SK-N-SH (cell line): ENCODE measurements at regions of chr7 and their contacts with region 1.

Region 1: DNA sequence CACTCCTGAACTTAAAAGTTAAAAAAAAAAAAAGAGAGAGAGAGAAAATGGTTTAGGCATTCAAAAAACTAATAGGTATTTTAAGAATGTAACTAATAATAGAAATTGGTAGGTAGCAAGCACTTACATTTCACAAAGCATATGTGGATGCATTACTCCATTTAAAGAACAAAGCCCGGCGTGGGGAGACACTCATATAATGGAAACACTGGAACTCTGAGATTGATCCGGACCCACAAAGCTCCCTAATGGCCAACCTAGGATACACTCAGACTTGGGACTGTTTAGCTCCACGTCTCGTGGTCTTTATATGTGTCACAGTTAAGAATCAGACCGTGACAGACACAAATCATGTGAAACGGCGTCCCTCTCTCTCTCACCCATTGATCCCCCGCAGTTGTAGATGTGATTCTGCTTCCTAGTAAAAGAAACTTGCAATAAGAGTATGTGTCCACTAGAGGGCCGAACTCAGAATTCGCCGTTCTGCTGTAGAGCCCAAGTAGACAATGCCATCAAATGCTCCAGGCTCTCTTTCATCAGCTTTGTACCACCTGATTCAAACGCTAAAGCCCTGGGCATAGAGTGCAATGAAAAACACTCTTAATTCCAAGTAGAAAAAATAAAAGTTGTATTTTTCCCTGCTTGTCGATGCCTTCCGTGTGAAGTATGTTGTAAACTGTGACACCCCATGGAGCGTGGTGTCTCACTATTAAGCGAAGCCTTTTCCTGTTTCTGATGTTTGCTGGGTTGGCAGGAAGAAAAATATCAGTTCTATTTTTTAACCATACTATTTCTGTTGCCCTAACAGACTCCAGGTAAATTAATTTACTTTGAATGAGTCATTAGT is 429.0 kb upstream of the MTPN start:
- DNase-seq: peak; percentile 65
- H3K4me3 ChIP-seq: peak overlapping the region in 1 of 2 experiments; percentile 21; a peak in 1 of 4 replicates
- H3K27ac ChIP-seq: no peak overlapping the region
- H3K4me1 ChIP-seq: peaks cover 0 to 2% of the 10 kb centered on the region in 2 experiments; a peak in 1 of 4 replicates
- H3K27me3 ChIP-seq: no peaks in the 10 kb centered on the region
- CTCF ChIP-seq: peak; percentile 90
- EP300 ChIP-seq: no peak
- RAD21 ChIP-seq: peak; percentile 85

Region 2: DNA sequence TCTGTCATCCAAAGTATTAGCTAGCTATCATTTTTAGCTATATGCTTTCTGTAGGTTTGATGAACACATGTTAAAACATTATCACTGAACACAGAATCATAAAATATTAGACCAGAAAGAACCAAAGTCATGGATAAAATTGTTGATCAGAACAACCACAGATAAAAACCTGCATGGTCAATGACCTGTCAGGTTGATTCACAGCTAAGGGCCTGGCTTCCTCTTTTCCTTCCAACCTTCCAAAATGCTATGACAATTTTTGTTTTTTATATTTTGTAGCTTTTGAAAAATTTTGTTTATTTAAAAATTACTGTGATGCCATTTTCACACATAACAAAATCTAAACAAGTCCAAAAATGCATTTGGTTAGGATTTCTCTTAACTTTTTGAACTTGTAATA is 17.9 kb after region 1 on chr7:
- CTCF ChIA-PET with region 1: interaction called, 24 read pairs
- POLR2A ChIA-PET with region 1: no interaction called
- DNase-seq: no peak
- H3K4me3 ChIP-seq: no peak overlapping the region
- H3K27ac ChIP-seq: no peak overlapping the region
- H3K4me1 ChIP-seq: no peaks in the 10 kb centered on the region
- H3K27me3 ChIP-seq: no peaks in the 10 kb centered on the region
- CTCF ChIP-seq: no peak
- EP300 ChIP-seq: no peak
- RAD21 ChIP-seq: no peak

Region 3: GRCh38 chr7:136470179-136470578 is 64.0 kb after region 1 on chr7:
- CTCF ChIA-PET with region 1: no interaction called
- POLR2A ChIA-PET with region 1: no interaction called
- DNase-seq: no peak
- H3K4me3 ChIP-seq: no peak overlapping the region
- H3K27ac ChIP-seq: no peak overlapping the region
- H3K4me1 ChIP-seq: no peaks in the 10 kb centered on the region
- H3K27me3 ChIP-seq: no peaks in the 10 kb centered on the region
- CTCF ChIP-seq: no peak
- EP300 ChIP-seq: no peak
- RAD21 ChIP-seq: no peak

Region 4: GRCh38 chr7:136594739-136595144 is 188.6 kb after region 1 on chr7:
- CTCF ChIA-PET with region 1: interaction called, 11 read pairs
- POLR2A ChIA-PET with region 1: no interaction called
- DNase-seq: peak; percentile 63
- H3K4me3 ChIP-seq: no peak overlapping the region
- H3K27ac ChIP-seq: peak overlapping the region in 1 of 2 experiments; percentile 99; a peak in 2 of 4 replicates
- H3K4me1 ChIP-seq: peaks cover 0 to 24% of the 10 kb centered on the region in 2 experiments; a peak in 2 of 4 replicates
- H3K27me3 ChIP-seq: no peaks in the 10 kb centered on the region
- CTCF ChIP-seq: no peak
- EP300 ChIP-seq: peak in 1 of 2 experiments; percentile 98; a peak in 2 of 4 replicates
- RAD21 ChIP-seq: peak; percentile 62

Region 5: DNA sequence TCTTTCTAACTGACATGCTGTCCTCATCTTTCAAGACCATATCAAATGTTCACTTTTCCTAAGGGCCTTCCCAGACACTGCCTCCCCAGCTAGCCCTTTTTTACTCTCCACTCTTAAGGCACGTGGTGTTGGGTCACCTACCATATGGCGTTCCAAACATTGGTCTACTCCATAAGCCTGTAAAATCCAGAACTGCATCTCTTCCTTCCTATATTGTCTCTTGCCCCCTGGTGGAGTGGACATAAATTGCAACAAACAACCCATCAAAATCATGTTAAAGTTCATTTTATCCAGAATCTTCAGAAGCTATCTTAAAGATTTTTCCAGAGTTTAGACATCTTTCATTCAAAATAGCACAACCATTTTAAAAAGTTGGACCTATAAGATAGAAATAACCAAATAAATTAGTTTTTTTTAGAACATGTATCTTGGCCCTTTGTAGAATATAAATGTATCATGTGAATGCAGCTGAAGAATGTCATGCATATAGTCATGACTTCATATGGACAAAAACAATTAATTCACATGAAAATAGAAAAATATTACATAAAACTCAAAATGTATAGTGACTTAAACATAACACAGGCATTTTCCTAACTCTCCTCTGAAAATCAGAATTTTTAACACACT is 281.7 kb after region 1 on chr7:
- CTCF ChIA-PET with region 1: interaction called, 14 read pairs
- POLR2A ChIA-PET with region 1: no interaction called
- DNase-seq: peak; percentile 33
- H3K4me3 ChIP-seq: no peak overlapping the region; a peak in 1 of 4 replicates
- H3K27ac ChIP-seq: no peak overlapping the region
- H3K4me1 ChIP-seq: peaks cover 0 to 20% of the 10 kb centered on the region in 2 experiments; a peak in 2 of 4 replicates
- H3K27me3 ChIP-seq: no peaks in the 10 kb centered on the region
- CTCF ChIP-seq: peak; percentile 59
- EP300 ChIP-seq: no peak
- RAD21 ChIP-seq: peak; percentile 65